MCF 10A (cell line): ENCODE measurements at regions of chr1 and their contacts with region 1.

Region 1: GRCh38 chr1:234599617-234600417 is 10.2 kb downstream of the IRF2BP2 start:
- DNase-seq: peak; percentile 93
- H3K4me3 Mint-ChIP-seq: peak overlapping the region; percentile 80
- H3K27ac Mint-ChIP-seq: peak overlapping the region; percentile 90
- H3K4me1 Mint-ChIP-seq: peaks cover 41% of the 10 kb centered on the region
- H3K27me3 Mint-ChIP-seq: no peaks in the 10 kb centered on the region
- CTCF ChIP-seq: no peak

Region 2: GRCh38 chr1:234486498-234487448 is 113.0 kb before region 1 on chr1:
- CTCF ChIA-PET with region 1: interaction called, 19 read pairs
- POLR2A ChIA-PET with region 1: interaction called, 7 read pairs
- intact Hi-C with region 1: no loop called
- DNase-seq: peak; percentile 87
- H3K4me3 Mint-ChIP-seq: no peak overlapping the region
- H3K27ac Mint-ChIP-seq: no peak overlapping the region
- H3K4me1 Mint-ChIP-seq: peaks cover 15% of the 10 kb centered on the region
- H3K27me3 Mint-ChIP-seq: peaks cover 20% of the 10 kb centered on the region
- CTCF ChIP-seq: peak; percentile 96

Region 3: GRCh38 chr1:234533975-234534876 is 65.6 kb before region 1 on chr1:
- CTCF ChIA-PET with region 1: interaction called, 13 read pairs
- POLR2A ChIA-PET with region 1: interaction called, 467 read pairs
- intact Hi-C with region 1: loop called (anchors 1 kb)
- DNase-seq: peak; percentile 100
- H3K4me3 Mint-ChIP-seq: peak overlapping the region; percentile 31
- H3K27ac Mint-ChIP-seq: peak overlapping the region; percentile 93
- H3K4me1 Mint-ChIP-seq: peaks cover 43% of the 10 kb centered on the region
- H3K27me3 Mint-ChIP-seq: no peaks in the 10 kb centered on the region
- CTCF ChIP-seq: no peak

Region 4: GRCh38 chr1:234564642-234565037 is 35.2 kb before region 1 on chr1:
- CTCF ChIA-PET with region 1: interaction called, 10 read pairs
- POLR2A ChIA-PET with region 1: interaction called, 137 read pairs
- intact Hi-C with region 1: loop called (anchors 2 kb)
- DNase-seq: peak; percentile 100
- H3K4me3 Mint-ChIP-seq: no peak overlapping the region
- H3K27ac Mint-ChIP-seq: peak overlapping the region; percentile 80
- H3K4me1 Mint-ChIP-seq: peaks cover 25% of the 10 kb centered on the region
- H3K27me3 Mint-ChIP-seq: no peaks in the 10 kb centered on the region
- CTCF ChIP-seq: no peak

Region 5: GRCh38 chr1:235018161-235018560 is 418.3 kb after region 1 on chr1:
- CTCF ChIA-PET with region 1: no interaction called
- POLR2A ChIA-PET with region 1: interaction called, 14 read pairs
- intact Hi-C with region 1: no loop called
- DNase-seq: peak; percentile 100
- H3K4me3 Mint-ChIP-seq: no peak overlapping the region
- H3K27ac Mint-ChIP-seq: peak overlapping the region; percentile 0
- H3K4me1 Mint-ChIP-seq: peaks cover 25% of the 10 kb centered on the region
- H3K27me3 Mint-ChIP-seq: no peaks in the 10 kb centered on the region
- CTCF ChIP-seq: no peak

Region 6: DNA sequence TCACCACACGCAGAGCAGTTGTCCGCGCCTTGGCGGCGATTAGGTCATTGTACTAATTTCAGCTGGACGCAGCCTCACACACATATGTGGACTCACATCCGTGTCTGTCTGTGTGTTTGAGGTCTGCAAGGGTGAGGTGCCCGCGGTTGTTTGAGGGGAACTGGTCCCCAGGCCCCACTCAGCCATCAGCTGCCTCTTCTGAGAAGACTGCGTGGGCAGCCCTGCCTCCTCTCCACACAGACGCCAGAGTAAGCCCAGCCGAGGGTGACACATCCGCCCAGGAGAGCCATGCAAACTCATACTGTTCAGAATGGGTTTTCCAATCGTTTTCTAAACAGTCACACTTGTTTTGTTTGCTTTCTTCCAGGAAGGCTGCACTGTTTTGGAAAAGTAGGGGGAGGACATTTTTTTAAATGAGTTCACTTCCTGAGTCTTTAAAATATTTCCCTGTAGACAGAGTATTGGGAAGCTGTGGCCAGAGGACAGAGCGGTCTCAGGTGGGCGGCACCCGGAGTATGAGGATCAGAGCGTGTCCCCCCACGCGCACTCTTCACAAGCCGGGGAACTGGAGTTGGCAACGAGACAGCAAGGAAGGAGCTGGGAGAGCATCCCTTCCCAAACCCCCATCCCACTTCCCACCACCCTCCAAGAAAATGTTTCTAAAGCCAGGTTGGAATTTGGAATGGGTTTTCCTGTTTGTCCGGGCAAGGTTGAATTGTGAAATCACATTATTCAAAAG is 475.5 kb after region 1 on chr1:
- CTCF ChIA-PET with region 1: interaction called, 5 read pairs
- POLR2A ChIA-PET with region 1: interaction called, 114 read pairs
- intact Hi-C with region 1: no loop called
- DNase-seq: peak; percentile 92
- H3K4me3 Mint-ChIP-seq: no peak overlapping the region
- H3K27ac Mint-ChIP-seq: peak overlapping the region; percentile 52
- H3K4me1 Mint-ChIP-seq: peaks cover 30% of the 10 kb centered on the region
- H3K27me3 Mint-ChIP-seq: no peaks in the 10 kb centered on the region
- CTCF ChIP-seq: no peak